AG04450 (cell line): ENCODE measurements at regions of chr12 and their contacts with region 1.

Region 1: DNA sequence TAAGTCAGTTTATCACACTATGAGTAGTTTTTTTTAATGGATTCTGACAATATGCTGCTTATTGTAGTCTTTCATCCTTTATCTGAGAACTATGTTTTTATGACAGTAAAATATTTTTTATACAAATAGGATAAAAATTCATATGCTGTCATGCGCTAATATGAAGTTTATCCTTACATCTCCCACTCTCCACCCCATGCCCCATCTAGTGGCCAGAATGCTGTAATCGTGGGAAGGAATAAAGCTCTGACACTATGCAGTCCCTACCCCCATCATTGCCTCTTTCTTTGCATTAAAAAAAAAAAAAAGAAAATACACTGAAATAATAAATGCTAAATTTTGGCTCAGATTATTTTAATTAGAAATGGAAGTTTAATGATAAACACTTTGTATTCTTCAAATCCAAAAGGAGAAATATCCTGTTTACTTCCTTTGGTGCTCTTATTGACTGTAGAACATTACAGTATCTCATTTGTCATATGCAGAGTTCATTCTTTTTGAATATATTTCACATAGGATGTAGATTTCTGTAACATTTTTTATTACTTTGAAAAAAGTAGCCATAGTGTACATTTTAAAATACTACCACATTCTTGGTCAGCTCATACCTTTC is 145.9 kb upstream of the SLCO1C1 start:
- DNase-seq: no peak
- H3K4me3 ChIP-seq: no peak overlapping the region
- H3K27ac ChIP-seq: no peak overlapping the region
- H3K27me3 ChIP-seq: no peaks in the 10 kb centered on the region
- CTCF ChIP-seq: peak; percentile 89

Region 2: GRCh38 chr12:20361416-20361815 is 187.8 kb before region 1 on chr12:
- CTCF ChIA-PET with region 1: no interaction called
- POLR2A ChIA-PET with region 1: no interaction called
- DNase-seq: no peak
- H3K4me3 ChIP-seq: no peak overlapping the region
- H3K27ac ChIP-seq: no peak overlapping the region
- H3K27me3 ChIP-seq: no peaks in the 10 kb centered on the region
- CTCF ChIP-seq: no peak

Region 3: DNA sequence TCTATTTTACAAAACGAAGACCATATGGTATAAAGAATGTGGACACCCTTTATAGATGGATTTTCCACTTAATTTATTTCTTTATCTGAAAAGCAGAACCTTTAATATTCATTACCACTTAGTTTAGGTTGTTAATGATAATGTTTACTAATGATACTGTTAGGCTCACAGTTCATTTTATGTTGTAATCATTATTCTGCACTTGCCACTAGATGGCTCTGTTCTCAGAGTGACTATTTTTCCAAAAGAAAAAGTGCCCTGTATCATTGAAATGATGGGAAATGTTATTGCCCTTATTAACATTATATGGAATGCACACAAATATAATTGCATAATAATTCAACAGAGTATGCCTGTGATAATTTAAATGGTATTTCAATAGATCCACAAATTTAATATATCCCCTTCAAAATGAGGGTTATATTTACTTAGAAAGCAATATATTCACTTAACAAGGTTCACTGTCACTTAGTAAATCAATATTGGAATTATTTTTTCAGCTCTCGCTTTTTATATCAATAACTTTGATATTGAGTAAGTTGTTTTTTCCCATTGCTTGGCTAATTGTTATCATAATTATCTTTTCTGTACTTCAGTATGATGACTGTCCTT is 85.2 kb before region 1 on chr12:
- CTCF ChIA-PET with region 1: interaction called, 44 read pairs
- POLR2A ChIA-PET with region 1: no interaction called
- DNase-seq: no peak
- H3K4me3 ChIP-seq: no peak overlapping the region
- H3K27ac ChIP-seq: no peak overlapping the region
- H3K27me3 ChIP-seq: no peaks in the 10 kb centered on the region
- CTCF ChIP-seq: peak; percentile 68

Region 4: DNA sequence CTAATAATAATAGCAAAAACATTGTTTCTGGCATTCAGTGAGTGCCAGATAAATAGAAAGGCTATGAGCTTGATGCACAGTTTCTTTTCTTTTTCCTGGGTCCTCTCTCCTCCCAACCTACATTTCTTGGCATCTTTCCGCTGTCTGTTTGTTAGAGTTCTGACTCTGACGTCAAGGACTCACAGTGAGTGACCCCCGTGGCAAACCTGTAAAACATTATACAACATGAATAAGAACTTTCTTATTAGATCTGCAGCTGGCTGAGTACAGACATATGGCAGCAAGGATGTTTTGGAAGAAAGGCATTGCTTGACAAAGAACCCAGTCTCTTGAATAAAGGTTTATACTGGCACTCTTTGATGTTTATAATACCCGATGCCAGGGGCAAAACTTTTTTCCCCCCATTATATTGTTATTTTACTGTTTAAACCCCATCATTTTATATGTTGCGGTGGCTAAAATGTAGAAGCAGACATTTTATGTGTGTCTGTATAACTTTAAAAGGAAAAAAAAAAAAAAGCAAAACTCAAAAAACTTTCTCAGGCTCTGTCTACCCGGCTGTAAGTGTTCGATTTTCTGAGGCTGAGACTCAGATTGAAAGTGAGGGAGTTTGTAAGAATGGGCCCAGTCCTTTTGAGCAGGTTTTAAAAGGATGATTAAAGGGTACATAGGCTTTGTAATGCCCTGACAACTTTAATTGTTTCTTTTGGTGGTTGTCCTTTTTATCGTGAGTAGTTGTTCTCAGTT is 21.6 kb before region 1 on chr12:
- CTCF ChIA-PET with region 1: interaction called, 15 read pairs
- POLR2A ChIA-PET with region 1: no interaction called
- DNase-seq: peak; percentile 65
- H3K4me3 ChIP-seq: no peak overlapping the region
- H3K27ac ChIP-seq: peak overlapping the region; percentile 23
- H3K27me3 ChIP-seq: no peaks in the 10 kb centered on the region
- CTCF ChIP-seq: no peak

Region 5: DNA sequence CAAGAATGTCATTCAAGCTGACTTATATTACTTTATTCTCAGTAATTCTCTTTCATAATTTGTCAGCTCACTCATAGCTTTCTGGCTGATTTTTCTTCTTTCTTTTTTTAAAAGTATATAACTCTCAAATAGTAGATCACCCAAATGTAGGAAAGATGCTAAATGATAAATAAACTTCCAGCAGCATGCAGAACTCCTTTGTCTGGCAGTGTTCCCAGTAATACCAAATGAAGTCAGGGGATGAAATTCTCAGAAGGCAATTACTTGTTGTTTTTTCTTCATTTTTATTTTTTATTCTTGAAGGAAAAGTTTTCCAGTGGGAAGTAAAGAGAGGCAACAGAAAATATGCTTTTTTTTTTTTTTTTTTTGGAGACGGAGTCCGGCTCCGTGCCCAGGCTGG is 12.7 kb after region 1 on chr12:
- CTCF ChIA-PET with region 1: interaction called, 30 read pairs
- POLR2A ChIA-PET with region 1: no interaction called
- DNase-seq: no peak
- H3K4me3 ChIP-seq: no peak overlapping the region
- H3K27ac ChIP-seq: no peak overlapping the region
- H3K27me3 ChIP-seq: no peaks in the 10 kb centered on the region
- CTCF ChIP-seq: no peak